AG04450 (cell line): ENCODE measurements at regions of chr10 and their contacts with region 1.

Region 1: GRCh38 chr10:92342796-92343195 is 51.8 kb downstream of the MARCHF5 start:
- DNase-seq: no peak
- H3K4me3 ChIP-seq: no peak overlapping the region
- H3K27ac ChIP-seq: no peak overlapping the region
- H3K27me3 ChIP-seq: no peaks in the 10 kb centered on the region
- CTCF ChIP-seq: no peak

Region 2: DNA sequence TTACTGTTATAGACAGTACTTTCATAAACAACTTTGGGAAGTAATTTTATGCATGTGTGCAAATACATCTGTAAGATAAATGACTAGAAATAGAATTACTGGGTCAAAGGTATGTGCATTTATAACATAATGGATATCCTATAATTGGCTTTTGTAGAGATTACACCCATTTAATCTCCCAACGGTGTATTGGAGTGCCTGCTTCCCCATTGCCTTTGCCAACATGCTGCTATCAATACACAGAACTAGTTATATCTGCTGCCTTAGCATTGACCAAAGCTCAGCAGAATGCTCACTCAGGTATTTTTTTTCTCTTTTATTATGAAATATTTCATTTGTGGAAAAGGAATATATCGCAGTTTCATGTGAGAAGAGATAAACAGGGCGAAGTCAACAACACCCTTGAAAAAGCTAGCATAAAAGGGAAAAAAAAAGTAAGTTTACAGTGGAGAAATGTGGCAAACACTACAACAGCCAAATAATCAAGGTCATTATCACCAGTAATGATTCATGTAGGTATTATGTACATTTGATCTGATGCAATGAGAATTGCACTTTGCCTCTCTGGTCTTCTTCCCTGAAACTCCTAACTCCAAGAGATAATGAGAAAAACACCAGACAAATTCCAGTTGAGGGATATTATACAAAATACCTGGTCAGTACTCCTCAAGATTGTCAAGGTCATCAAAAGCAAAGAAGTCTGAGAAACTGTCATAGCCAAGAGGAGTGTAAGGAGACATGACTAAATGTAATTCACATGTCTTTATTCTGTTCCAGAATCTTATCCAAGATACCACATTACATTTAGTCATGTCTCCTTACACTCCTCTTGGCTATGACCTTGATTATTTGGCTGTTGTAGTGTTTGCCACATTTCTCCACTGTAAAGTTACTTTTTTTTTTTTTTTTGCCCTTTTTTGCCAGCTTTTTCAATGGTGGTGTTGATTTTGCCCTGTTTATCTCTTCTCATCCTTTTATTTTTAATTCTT is 15.1 kb before region 1 on chr10:
- CTCF ChIA-PET with region 1: interaction called, 10 read pairs
- POLR2A ChIA-PET with region 1: no interaction called
- DNase-seq: no peak
- H3K4me3 ChIP-seq: no peak overlapping the region
- H3K27ac ChIP-seq: no peak overlapping the region
- H3K27me3 ChIP-seq: no peaks in the 10 kb centered on the region
- CTCF ChIP-seq: no peak